Left ventricle myocardium superior (tissue), 1 donor: ENCODE measurements at regions of chr12 and their contacts with region 1.

Region 1: GRCh38 chr12:114662512-114663177 is 21.3 kb downstream of the TBX3 start:
- DNase-seq: peak; percentile 83
- ATAC-seq: peak; percentile 55

Region 2: GRCh38 chr12:115752913-115753726 is 1090.5 kb after region 1 on chr12:
- intact Hi-C with region 1: loop called (anchors 5 kb)
- DNase-seq: no peak
- ATAC-seq: peak; percentile 91

Region 3: DNA sequence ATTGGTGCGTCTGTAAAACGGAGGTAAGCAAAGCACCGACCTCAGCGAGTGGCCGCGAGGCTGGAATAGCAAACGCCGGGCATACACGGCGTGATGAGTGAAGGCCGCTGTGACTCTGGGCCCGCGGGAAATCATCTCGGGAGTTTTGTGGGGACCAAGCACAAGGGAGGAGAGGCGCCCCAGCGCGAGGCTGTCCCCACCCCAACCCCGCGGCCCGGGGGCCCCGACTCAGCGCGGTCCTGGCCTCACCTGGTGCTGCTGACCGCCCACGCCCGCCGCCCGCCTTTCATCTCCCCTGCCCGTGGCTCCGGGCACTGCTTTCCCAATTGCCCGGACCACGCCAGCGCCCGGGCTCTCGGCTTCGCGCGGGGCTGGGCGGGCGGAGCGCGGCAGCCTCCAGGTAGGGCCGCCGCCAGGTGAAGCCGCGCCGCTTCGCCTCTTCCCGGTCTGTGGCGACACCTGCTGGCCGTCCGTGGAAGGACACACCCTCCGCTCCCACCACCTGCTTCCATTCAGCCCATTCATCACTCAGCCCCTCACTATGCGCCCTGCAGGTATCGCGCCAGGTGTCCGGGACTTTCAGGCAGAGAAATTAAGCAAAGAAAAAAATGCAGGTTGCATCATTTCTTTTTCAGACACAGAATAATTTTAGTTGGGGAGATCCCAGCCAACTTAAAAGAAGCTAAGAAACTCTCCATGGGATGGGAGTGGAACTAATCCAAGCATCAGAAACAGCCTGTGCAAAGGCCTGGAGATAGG is 1254.4 kb after region 1 on chr12:
- intact Hi-C with region 1: loop called (anchors 5 kb)
- DNase-seq: peak; percentile 72
- ATAC-seq: peak; percentile 82